GM12878 (cell line): ENCODE measurements at regions of chr10 and their contacts with region 1.

Region 1: DNA sequence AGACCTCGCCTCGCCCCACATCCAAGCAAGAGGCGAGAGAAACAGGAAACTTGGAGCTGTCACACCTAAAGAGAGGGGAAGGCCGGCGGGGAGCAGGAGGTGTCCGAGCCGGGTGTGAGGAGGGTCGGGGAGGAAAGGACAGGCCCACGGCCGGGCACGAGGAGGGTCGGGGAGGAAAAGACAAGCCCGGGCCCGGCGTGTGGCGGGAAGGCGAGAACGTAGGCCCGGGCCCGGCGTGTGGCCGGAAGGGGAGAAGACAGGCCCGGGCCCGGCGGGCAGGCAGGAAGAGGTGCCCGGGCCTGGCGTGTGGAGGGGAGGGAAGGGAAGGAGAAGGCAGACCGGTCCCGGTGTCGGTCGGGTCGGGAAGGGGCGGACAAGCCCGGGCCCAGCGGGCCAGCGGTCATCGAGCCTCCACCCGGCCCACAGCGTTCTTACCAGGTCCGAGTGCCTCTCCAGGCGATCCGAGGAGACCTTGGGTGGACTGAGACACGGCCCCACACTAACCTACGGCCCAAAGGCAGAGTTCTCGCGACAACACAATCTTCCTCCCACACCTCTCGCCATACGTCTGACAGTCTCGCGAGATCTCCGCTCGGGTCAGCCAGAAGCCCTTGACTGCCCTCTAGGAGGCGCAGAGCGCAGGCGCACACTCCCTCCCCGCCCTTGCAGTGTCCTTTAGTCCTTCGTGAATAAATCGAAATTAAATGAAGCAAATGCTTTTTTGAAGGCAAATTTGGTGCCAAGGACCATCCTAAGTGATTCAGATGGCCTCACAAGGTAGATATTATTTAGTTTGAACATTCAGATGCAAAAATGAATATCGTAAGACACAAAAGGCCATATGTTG is at the start of gene NCOA4:
- DNase-seq: peak; percentile 95
- ATAC-seq: peak; percentile 97
- H3K4me3 ChIP-seq: peak within 1 kb of the TSS; percentile 73
- H3K27ac ChIP-seq: peak within 1 kb of the TSS; percentile 80
- H3K4me1 ChIP-seq: no peaks in the 10 kb centered on the region; the same call in none of the 2 replicates
- H3K27me3 ChIP-seq: no peaks in the 10 kb centered on the region
- CTCF ChIP-seq: peak; percentile 82 to 90 (median 86)
- EP300 ChIP-seq: no peak
- POLR2A ChIP-seq: peak; percentile 96
- RAD21 ChIP-seq: peak; percentile 30; the same call in 1 of the 2 replicates
- polyA plus RNA-seq, gene NCOA4: 57.5 to 62.6 TPM

Region 2: GRCh38 chr10:46006219-46006618 is 24.1 kb before region 1 on chr10:
- CTCF ChIA-PET with region 1: interaction called, 11 read pairs
- POLR2A ChIA-PET with region 1: interaction called, 4 read pairs
- RAD21 ChIA-PET with region 1: interaction called, 5 read pairs
- SMC1A ChIA-PET with region 1: interaction called, 4 read pairs
- in situ Hi-C with region 1: no loop called
- intact Hi-C with region 1: no loop called
- DNase-seq: no peak
- ATAC-seq: no peak
- H3K4me3 ChIP-seq: no peak overlapping the region
- H3K27ac ChIP-seq: no peak overlapping the region
- H3K4me1 ChIP-seq: no peaks in the 10 kb centered on the region
- H3K27me3 ChIP-seq: no peaks in the 10 kb centered on the region
- CTCF ChIP-seq: no peak
- EP300 ChIP-seq: no peak
- POLR2A ChIP-seq: no peak
- RAD21 ChIP-seq: no peak

Region 3: GRCh38 chr10:46064271-46064957 is 34.1 kb after region 1 on chr10:
- CTCF ChIA-PET with region 1: no interaction called
- POLR2A ChIA-PET with region 1: no interaction called
- RAD21 ChIA-PET with region 1: no interaction called
- SMC1A ChIA-PET with region 1: no interaction called
- in situ Hi-C with region 1: no loop called
- intact Hi-C with region 1: no loop called
- DNase-seq: no peak
- ATAC-seq: no peak
- H3K4me3 ChIP-seq: no peak overlapping the region
- H3K27ac ChIP-seq: no peak overlapping the region
- H3K4me1 ChIP-seq: no peaks in the 10 kb centered on the region
- H3K27me3 ChIP-seq: peaks cover 0 to 2% of the 10 kb centered on the region in 2 experiments; a peak in 2 of 4 replicates
- CTCF ChIP-seq: no peak
- EP300 ChIP-seq: no peak
- POLR2A ChIP-seq: no peak
- RAD21 ChIP-seq: no peak